ENCODE measurements at regions of chr5 and their contacts with region 1.

Region 1: GRCh38 chr5:88391116-88391515 is 122.5 kb upstream of the TMEM161B start:
- DNase-seq: no peak
- ATAC-seq: no peak
- H3K4me3 ChIP-seq: no peak overlapping the region
- H3K27ac ChIP-seq: no peak overlapping the region
- H3K4me1 ChIP-seq: no peaks in the 10 kb centered on the region
- H3K27me3 ChIP-seq: no peaks in the 10 kb centered on the region
- CTCF ChIP-seq: no peak
- POLR2A ChIP-seq: no peak
- RAD21 ChIP-seq: no peak

Region 2: DNA sequence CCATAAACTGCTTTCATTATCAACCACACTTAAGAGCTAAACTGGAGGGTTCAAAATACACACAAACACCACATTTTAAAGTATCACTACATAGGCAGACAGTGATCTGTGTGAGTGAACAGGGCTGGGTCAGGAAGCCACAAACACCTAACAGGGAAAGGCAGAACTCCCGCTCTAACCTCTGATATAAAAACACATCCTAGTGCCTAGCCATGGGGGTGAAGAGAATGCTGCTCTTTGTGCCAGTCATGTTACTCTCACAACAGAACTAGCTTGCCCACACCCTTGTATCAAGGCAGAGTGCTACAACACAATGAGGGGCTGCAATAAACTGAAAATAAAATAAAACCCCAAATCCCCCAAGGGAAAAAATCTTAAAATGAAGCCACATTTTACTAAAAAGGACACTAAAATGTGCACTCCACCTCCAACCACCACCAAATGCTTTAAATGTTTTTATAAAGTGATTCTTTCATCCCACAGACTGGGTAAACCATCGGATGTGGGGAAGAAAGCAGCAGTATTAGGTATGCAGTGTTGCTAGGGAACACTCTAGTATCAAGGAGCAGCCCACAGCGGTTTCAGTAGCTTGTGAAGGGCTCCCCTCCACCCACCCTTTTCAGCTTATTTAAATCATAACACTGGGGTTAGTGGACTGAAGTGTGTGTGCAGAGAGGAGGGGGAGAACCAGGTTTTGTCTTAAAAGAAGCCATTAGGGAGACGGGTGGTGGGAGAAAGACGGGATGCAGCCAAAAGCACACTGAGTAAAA is 186.9 kb before region 1 on chr5:
- CTCF ChIA-PET with region 1: no interaction called
- POLR2A ChIA-PET with region 1: no interaction called
- dilution Hi-C with region 1: no loop called
- in situ Hi-C with region 1: no loop called
- intact Hi-C with region 1: loop called (anchors 10 kb)
- DNase-seq: peak; percentile 6
- ATAC-seq: no peak
- H3K4me3 ChIP-seq: no peak overlapping the region
- H3K27ac ChIP-seq: no peak overlapping the region
- H3K4me1 ChIP-seq: no peaks in the 10 kb centered on the region
- H3K27me3 ChIP-seq: no peaks in the 10 kb centered on the region
- CTCF ChIP-seq: no peak
- POLR2A ChIP-seq: no peak
- RAD21 ChIP-seq: no peak

Region 3: DNA sequence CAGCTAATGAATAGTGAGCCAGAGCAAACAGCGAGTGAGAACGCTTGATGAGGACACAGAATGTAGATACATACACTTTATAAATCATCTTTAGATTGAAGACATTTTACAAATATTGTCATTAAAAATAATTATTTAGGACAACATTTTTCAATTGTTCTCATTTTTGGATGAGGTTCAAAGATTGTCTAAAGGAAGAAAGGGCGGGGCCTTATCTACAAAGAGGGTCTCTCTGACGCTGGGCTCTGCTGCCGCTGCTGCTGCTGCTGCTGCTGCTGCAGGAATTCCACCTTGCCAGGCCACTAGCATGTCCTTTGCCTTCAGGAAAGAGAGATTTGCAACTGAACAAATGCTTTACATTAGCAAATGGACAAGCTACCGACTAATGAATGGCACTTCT is 98.2 kb after region 1 on chr5:
- CTCF ChIA-PET with region 1: no interaction called
- POLR2A ChIA-PET with region 1: no interaction called
- dilution Hi-C with region 1: no loop called
- in situ Hi-C with region 1: no loop called
- intact Hi-C with region 1: no loop called
- DNase-seq: no peak
- ATAC-seq: no peak
- H3K4me3 ChIP-seq: no peak overlapping the region
- H3K27ac ChIP-seq: no peak overlapping the region
- H3K4me1 ChIP-seq: no peaks in the 10 kb centered on the region
- H3K27me3 ChIP-seq: no peaks in the 10 kb centered on the region
- CTCF ChIP-seq: no peak
- POLR2A ChIP-seq: no peak
- RAD21 ChIP-seq: no peak

Measured in IMR-90 (cell line).